Left cardiac atrium (tissue), 4 donors: ENCODE measurements at regions of chr7 and their contacts with region 1.

Region 1: GRCh38 chr7:96401200-96401599 is 79.3 kb upstream of the SLC25A13 start:
- DNase-seq: peak; percentile 34
- ATAC-seq: peak; percentile 33 to 53

Region 2: DNA sequence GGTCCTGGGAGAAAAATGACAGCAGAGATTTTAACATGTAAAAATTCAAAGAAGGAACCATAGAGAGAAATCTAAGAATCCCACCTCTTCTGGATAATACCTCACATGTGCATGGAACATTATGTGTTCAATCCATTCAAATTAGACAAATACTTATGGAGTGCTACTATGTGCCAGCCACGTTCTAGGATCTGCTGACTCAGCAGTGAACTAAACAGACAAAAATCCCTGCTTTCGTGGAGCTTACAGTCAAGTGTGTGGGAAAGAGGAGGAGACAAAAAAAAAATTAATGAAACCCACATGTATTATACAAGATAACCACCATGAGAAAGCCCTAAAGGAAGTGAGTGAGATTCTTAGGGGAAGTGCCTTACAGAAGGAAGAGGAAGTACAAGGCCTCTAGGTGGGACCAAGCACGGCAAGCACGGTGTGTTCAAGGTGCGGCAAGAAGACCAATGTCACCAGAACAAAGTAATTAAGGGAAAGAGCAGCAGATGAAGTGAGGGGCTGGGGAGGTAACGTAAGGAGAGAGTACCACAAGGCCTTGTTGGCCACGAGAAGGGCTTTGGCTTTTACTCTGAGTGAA is 150.3 kb before region 1 on chr7:
- intact Hi-C with region 1: no loop called
- DNase-seq: no peak
- ATAC-seq: no peak

Region 3: GRCh38 chr7:96297876-96298275 is 103.3 kb before region 1 on chr7:
- intact Hi-C with region 1: no loop called
- DNase-seq: no peak
- ATAC-seq: no peak

Region 4: GRCh38 chr7:96562966-96563365 is 161.8 kb after region 1 on chr7:
- intact Hi-C with region 1: no loop called
- DNase-seq: no peak
- ATAC-seq: no peak

Region 5: GRCh38 chr7:96709381-96710228 is 308.4 kb after region 1 on chr7 and contains the start of gene SEM1:
- intact Hi-C with region 1: loop called in 1 of 2 experiments (anchors 5 kb)
- DNase-seq: peak; percentile 92
- ATAC-seq: peak; percentile 100
- total RNA-seq, gene SEM1: 51.3 to 59.8 TPM